ENCODE measurements at regions of chr1 and their contacts with region 1.

Region 1: DNA sequence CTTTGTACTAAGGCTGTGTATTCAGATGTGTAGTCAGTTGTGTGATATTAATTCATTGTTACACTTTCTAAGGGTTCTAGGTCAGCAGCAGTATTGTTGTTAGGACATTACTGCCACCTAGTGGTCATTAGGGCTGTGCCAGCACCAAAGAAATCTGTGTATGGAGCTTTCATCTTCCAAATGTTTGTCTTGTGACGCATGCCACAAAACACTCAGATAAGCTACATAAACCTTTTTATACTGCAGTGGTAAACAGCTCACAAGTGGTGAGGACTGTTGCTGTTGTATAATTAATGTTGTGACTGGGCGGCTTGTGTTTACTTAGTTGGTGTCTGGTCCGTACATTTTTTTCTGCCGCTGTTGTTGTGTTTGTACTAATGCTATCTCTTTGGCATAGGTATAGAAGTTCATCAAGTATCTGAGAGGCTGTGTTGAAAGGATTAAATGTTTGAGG is 51.7 kb downstream of the S1PR1 start:
- DNase-seq: peak; percentile 78
- H3K4me3 Mint-ChIP-seq: no peak overlapping the region
- H3K27ac Mint-ChIP-seq: peak overlapping the region; percentile 66
- H3K4me1 Mint-ChIP-seq: peaks cover 80% of the 10 kb centered on the region
- H3K27me3 Mint-ChIP-seq: no peaks in the 10 kb centered on the region

Region 2: GRCh38 chr1:100443811-100444571 is 844.5 kb before region 1 on chr1:
- CTCF ChIA-PET with region 1: no interaction called
- POLR2A ChIA-PET with region 1: no interaction called
- intact Hi-C with region 1: loop called (anchors 5 kb)
- DNase-seq: peak; percentile 65
- H3K4me3 Mint-ChIP-seq: peak overlapping the region; percentile 82
- H3K27ac Mint-ChIP-seq: peak overlapping the region; percentile 98
- H3K4me1 Mint-ChIP-seq: peaks cover 84% of the 10 kb centered on the region
- H3K27me3 Mint-ChIP-seq: no peaks in the 10 kb centered on the region

Region 3: DNA sequence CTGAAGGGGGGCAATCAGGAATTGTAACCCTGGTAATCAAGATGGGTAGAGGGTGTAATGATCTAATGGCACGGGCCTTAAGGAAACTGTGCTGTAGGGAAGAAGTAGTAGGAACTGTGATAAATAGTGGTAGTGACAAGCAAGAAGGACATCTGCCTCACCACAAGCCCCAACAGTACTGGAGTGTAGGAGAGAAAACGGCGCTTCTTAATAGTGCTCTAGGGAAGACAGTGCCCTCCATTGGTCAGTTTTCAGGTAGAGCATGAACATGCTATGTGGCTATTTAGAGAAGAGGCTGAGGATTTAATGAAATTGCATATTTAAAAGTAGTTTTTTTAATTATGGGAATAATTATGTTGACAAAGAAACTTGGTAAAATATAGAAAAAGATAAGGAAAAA is 360.4 kb before region 1 on chr1:
- CTCF ChIA-PET with region 1: interaction called, 63 read pairs
- POLR2A ChIA-PET with region 1: no interaction called
- intact Hi-C with region 1: loop called (anchors 1 kb)
- DNase-seq: no peak
- H3K4me3 Mint-ChIP-seq: no peak overlapping the region
- H3K27ac Mint-ChIP-seq: no peak overlapping the region
- H3K4me1 Mint-ChIP-seq: peaks cover 58% of the 10 kb centered on the region
- H3K27me3 Mint-ChIP-seq: no peaks in the 10 kb centered on the region

Region 4: GRCh38 chr1:101081496-101082488 is 206.7 kb before region 1 on chr1:
- CTCF ChIA-PET with region 1: interaction called, 3 read pairs
- POLR2A ChIA-PET with region 1: no interaction called
- intact Hi-C with region 1: loop called (anchors 1 kb)
- DNase-seq: peak; percentile 62
- H3K4me3 Mint-ChIP-seq: no peak overlapping the region
- H3K27ac Mint-ChIP-seq: no peak overlapping the region
- H3K4me1 Mint-ChIP-seq: peaks cover 34% of the 10 kb centered on the region
- H3K27me3 Mint-ChIP-seq: no peaks in the 10 kb centered on the region

Region 5: DNA sequence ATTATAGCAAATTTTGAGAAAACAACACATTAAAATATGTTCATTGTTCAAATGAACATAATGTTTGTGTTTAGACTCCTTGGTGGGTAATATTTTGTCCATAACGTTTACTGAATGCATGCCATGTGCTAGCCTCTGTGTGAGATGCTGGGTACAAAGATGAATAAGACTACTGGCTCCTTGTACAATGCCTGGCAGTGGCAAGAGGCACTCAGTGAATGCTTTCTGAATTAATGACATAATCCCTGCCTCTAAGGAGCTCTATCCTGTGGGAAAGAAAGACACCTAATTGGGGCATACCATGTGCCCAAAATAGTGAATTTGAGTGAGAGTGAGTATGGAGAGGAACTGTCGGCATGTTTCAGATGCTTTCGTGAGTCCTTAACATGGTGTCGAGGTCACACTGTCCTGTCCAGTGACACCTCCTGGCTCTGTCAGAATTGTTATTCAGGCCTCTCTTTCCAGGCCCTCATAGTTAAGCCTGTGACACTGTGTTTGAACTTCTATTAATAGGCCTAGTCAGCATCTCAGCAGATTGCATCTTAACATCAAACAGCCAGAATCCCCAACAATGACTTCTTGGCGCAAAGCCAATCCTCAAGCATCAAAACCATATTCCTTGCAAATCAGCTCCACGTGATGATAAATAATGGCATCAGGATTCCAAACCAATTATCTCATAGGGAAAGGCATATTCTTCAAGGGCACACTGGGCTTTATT is 84.5 kb before region 1 on chr1:
- CTCF ChIA-PET with region 1: interaction called, 7 read pairs
- POLR2A ChIA-PET with region 1: interaction called, 17 read pairs
- intact Hi-C with region 1: loop called (anchors 1 kb)
- DNase-seq: no peak
- H3K4me3 Mint-ChIP-seq: no peak overlapping the region
- H3K27ac Mint-ChIP-seq: no peak overlapping the region
- H3K4me1 Mint-ChIP-seq: peaks cover 37% of the 10 kb centered on the region
- H3K27me3 Mint-ChIP-seq: no peaks in the 10 kb centered on the region

Region 6: GRCh38 chr1:101268893-101269292 is 19.6 kb before region 1 on chr1:
- CTCF ChIA-PET with region 1: interaction called, 18 read pairs
- POLR2A ChIA-PET with region 1: interaction called, 5 read pairs
- intact Hi-C with region 1: loop called (anchors 1 kb)
- DNase-seq: no peak
- H3K4me3 Mint-ChIP-seq: no peak overlapping the region
- H3K27ac Mint-ChIP-seq: no peak overlapping the region
- H3K4me1 Mint-ChIP-seq: peaks cover 42% of the 10 kb centered on the region
- H3K27me3 Mint-ChIP-seq: no peaks in the 10 kb centered on the region

Region 7: DNA sequence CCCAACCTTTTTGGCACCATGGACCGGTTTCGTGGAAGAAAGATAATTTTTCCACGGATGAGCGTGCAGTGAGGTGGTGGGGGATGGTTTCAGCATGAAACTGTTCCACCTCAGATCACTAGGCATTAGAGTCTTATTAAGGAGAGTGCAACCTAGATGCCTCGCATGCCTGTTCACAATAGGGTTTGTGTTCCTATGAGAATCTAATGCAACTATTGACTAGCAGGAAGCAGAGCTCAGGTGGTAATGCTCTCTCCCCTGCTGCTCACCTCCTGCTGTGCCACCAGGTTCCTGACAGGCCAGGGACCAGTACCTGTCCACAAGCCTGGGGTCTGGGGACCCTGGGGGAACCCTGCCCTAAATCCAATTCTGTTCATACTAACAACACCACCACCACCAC is 330.4 kb after region 1 on chr1:
- CTCF ChIA-PET with region 1: no interaction called
- POLR2A ChIA-PET with region 1: no interaction called
- intact Hi-C with region 1: no loop called
- DNase-seq: no peak
- H3K4me3 Mint-ChIP-seq: no peak overlapping the region
- H3K27ac Mint-ChIP-seq: no peak overlapping the region
- H3K4me1 Mint-ChIP-seq: no peaks in the 10 kb centered on the region
- H3K27me3 Mint-ChIP-seq: no peaks in the 10 kb centered on the region